ENCODE measurements at regions of chr3 and their contacts with region 1.

Region 1: GRCh38 chr3:186882881-186883685 is 40.6 kb downstream of the ADIPOQ start:
- DNase-seq: peak; percentile 47
- H3K4me3 Mint-ChIP-seq: peak overlapping the region; percentile 52
- H3K27ac Mint-ChIP-seq: peak overlapping the region; percentile 87
- H3K4me1 Mint-ChIP-seq: peaks cover 57% of the 10 kb centered on the region
- H3K27me3 Mint-ChIP-seq: no peaks in the 10 kb centered on the region

Region 2: DNA sequence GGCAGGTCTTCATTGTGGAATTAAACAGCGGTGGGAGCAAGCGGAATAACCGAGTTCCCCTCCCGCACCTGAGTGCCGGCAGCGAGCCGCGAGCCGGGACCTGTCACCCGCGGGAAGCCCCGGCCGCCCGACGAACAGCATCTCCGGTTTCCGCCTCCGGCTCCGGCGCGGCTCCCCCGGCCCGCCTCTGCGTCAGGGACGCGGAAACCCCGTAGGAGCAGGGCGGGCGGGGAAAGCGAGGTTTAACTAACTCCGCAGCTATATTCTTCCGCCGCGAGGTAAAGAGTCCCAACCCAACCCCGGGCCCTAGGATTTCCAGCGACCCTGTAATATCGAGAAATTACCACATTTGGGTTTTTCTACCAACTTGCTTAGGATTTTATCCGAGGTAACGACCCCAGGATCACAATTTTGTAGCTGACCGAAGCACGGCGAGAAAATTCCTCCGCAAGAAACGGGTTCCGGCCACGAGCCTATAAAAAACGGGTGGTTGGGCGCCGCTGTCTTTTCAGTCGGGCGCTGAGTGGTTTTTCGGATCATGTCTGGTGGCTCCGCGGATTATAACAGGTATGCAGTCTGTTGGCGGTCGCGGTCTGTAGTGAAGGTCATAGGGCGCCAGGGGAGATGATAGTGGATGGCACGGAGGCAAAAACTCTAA is 99.9 kb before region 1 on chr3 and contains the start of gene EIF4A2:
- intact Hi-C with region 1: loop called (anchors 5 kb)
- DNase-seq: peak; percentile 88
- H3K4me3 Mint-ChIP-seq: peak within 1 kb of the TSS; percentile 96
- H3K27ac Mint-ChIP-seq: peak within 1 kb of the TSS; percentile 99
- H3K4me1 Mint-ChIP-seq: peaks cover 31% of the 10 kb centered on the region
- H3K27me3 Mint-ChIP-seq: no peaks in the 10 kb centered on the region
- total RNA-seq, gene EIF4A2: 445 and 450 TPM in 2 replicates

Region 3: DNA sequence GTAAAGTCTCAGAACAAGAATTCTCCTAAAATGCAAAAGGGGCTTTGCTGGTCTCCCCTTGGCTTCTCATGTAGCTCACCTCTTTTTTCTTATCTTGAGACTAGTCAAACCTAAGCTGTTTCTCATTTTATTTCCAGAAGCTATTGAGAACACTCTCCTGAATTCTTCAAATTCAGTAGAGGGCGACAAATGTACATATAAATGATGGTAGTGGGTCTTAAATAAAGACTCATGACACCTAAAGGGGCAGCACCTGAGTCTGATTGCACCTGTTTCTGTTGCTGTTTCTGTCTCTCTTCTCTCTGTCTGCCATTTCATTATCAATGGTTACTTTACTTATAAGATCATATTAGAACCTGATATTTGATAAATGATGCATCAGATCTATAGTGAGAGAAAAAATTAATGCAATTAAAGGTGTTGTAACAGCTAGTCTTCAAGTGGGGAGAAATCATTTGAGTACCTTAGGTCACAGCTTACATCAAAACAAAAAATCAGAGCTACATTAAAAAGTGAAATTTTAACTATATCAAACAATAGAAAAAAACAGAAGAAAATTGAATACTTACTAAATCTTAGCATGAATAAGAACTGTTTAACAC is 33.6 kb before region 1 on chr3:
- intact Hi-C with region 1: loop called (anchors 5 kb)
- DNase-seq: no peak
- H3K4me3 Mint-ChIP-seq: no peak overlapping the region
- H3K27ac Mint-ChIP-seq: peak overlapping the region; percentile 3
- H3K4me1 Mint-ChIP-seq: peaks cover 13% of the 10 kb centered on the region
- H3K27me3 Mint-ChIP-seq: peaks cover 15% of the 10 kb centered on the region

Region 4: GRCh38 chr3:186871403-186871924 is 11.6 kb before region 1 on chr3:
- intact Hi-C with region 1: no loop called
- DNase-seq: no peak
- H3K4me3 Mint-ChIP-seq: no peak overlapping the region
- H3K27ac Mint-ChIP-seq: peak overlapping the region; percentile 53
- H3K4me1 Mint-ChIP-seq: peaks cover 31% of the 10 kb centered on the region
- H3K27me3 Mint-ChIP-seq: no peaks in the 10 kb centered on the region

Region 5: DNA sequence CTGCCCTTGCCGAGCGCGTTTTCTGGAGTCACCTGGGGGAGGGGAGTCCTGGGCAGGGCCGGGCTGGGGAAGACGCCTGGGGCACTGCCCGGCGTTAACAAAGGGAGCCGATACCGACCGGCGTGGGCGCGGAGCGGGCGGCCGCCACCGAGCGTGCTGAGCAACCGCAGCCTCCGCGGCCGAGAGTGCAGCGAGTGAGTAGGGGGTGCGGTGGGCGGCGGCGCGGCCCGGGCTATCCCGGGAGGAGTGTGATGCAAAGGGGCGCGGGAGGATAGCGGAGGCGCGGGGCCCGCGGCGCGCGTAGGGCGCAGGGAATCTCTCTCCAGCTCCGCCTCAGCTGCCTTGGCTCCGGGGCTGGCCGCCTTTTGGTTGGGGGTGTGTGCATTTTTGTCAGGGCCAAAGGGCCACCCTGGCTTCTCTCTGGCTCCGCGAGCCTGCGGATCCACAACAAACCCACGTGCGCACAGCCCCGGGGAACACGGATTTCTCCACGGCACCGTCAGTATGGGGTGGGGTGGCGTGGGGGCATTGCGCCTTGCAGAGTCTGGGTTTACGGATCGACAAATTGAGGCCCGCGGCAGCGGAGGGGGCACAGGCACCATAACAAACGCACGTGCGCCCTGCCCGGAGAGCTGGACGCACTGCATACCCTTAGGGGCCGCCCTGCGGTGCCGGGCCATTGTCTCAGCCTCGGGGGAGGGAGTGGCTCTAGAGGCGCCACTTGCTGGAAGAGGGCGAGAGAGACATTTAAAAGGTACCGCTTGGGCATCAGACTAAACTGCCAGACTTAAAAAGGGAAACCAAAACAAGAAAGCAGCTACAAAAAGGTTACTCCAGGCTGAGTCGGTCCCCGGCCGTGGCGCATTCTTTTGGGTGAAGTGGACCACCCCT is 47.8 kb after region 1 on chr3:
- intact Hi-C with region 1: loop called (anchors 1 kb)
- DNase-seq: peak; percentile 60
- H3K4me3 Mint-ChIP-seq: peak overlapping the region; percentile 92
- H3K27ac Mint-ChIP-seq: peak overlapping the region; percentile 86
- H3K4me1 Mint-ChIP-seq: peaks cover 43% of the 10 kb centered on the region
- H3K27me3 Mint-ChIP-seq: no peaks in the 10 kb centered on the region

Region 6: GRCh38 chr3:187000711-187001151 is 117.6 kb after region 1 on chr3:
- intact Hi-C with region 1: loop called (anchors 1 kb)
- DNase-seq: no peak
- H3K4me3 Mint-ChIP-seq: peak overlapping the region; percentile 10
- H3K27ac Mint-ChIP-seq: peak overlapping the region; percentile 73
- H3K4me1 Mint-ChIP-seq: peaks cover 66% of the 10 kb centered on the region
- H3K27me3 Mint-ChIP-seq: no peaks in the 10 kb centered on the region

Region 7: DNA sequence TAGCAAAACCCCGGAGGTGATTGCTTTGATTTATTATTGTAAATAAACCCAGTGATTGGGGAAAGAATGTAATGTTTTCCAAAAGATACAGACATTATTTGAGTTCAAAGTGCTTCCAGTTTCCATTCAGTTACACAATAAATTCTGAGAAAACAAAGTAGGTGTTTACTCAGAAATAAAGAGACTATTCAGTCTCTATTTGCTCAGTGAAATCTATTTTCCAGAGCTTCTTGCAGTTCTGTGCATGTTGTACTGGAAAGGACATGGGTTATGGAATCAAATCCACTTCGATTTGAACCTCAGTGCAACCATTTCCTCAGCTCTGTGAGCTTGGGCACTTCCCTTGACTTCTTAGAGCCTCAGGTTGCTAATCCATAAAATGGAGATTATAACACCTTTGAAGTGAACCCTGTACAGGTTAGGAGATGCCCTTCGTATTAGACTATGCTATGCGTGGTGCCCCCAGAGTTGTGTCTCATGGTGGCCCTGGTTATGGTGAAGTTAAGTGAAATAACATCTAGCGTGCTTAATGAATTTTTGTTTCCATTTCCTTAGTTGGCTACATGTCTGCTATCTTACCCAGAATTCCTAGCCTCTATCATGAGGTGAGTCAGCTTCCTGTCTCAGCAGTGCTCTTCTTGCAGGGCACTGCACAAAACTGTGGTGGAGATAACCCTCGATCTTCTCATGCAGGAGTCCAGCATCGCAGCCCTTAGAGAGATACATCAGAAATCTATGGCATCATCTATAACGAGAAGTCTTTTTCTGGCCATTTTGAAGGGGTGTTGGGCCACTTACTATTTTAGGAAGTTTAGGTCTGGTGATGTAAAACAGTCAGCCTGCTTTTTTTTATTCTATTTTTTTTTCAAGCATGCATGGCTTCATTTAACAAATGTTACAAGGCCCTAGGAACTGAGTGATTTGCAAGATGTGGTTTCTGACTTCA is 158.6 kb after region 1 on chr3:
- intact Hi-C with region 1: loop called (anchors 1 kb)
- DNase-seq: peak; percentile 61
- H3K4me3 Mint-ChIP-seq: peak overlapping the region; percentile 68
- H3K27ac Mint-ChIP-seq: peak overlapping the region; percentile 99
- H3K4me1 Mint-ChIP-seq: peaks cover 76% of the 10 kb centered on the region
- H3K27me3 Mint-ChIP-seq: no peaks in the 10 kb centered on the region

Region 8: DNA sequence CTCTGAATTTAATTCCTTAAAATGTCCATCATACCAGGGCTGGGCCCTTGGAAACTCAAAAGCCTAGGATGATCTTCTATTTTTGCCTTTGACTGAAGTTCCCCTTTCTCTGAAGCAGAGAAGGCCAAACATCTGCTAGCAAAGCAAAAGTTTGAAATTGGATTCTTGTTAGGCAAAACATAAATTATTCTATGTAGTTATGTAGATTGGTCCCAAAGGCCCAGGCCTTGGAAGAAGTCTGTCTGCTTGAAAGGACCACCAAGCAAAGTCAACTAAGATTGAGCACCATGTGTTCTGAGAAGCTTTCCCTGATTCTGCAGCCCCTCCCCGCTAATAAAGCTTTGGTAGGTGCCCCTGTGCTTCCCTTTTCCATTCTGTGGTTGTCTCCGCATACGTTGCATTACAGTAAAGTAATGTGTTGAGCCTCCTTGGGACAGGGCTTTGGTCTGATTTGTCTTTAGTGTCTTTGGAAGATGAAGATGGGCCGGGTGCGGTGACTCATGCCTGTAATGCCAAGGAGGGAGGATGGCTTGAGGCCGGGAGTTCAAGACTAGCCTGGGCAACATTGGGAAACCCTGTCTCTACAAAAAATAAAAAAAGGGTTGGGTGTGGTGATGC is 199.8 kb after region 1 on chr3:
- intact Hi-C with region 1: no loop called
- DNase-seq: no peak
- H3K4me3 Mint-ChIP-seq: no peak overlapping the region
- H3K27ac Mint-ChIP-seq: no peak overlapping the region
- H3K4me1 Mint-ChIP-seq: peaks cover 7% of the 10 kb centered on the region
- H3K27me3 Mint-ChIP-seq: no peaks in the 10 kb centered on the region

Region 9: GRCh38 chr3:187719628-187720336 is 836.7 kb after region 1 on chr3:
- intact Hi-C with region 1: no loop called
- DNase-seq: no peak
- H3K4me3 Mint-ChIP-seq: no peak overlapping the region
- H3K27ac Mint-ChIP-seq: no peak overlapping the region
- H3K4me1 Mint-ChIP-seq: no peaks in the 10 kb centered on the region
- H3K27me3 Mint-ChIP-seq: no peaks in the 10 kb centered on the region